Stomach (tissue), 19 donors: ENCODE measurements at regions of chr1 and their contacts with region 1.

Region 1: GRCh38 chr1:223683586-223684487 is 18.3 kb upstream of the CAPN8 start:
- DNase-seq: peak; percentile 69 to 92
- H3K4me3 ChIP-seq: no peak overlapping the region
- H3K27ac ChIP-seq: no peak overlapping the region
- H3K4me1 ChIP-seq: peaks cover 0 to 4% (median 2%) of the 10 kb centered on the region in 4 donors
- H3K27me3 ChIP-seq: no peaks in the 10 kb centered on the region
- CTCF ChIP-seq: peak in 5 of 7 experiments; percentile 34 to 78 (median 41)
- EP300 ChIP-seq: no peak
- POLR2A ChIP-seq: no peak

Region 2: DNA sequence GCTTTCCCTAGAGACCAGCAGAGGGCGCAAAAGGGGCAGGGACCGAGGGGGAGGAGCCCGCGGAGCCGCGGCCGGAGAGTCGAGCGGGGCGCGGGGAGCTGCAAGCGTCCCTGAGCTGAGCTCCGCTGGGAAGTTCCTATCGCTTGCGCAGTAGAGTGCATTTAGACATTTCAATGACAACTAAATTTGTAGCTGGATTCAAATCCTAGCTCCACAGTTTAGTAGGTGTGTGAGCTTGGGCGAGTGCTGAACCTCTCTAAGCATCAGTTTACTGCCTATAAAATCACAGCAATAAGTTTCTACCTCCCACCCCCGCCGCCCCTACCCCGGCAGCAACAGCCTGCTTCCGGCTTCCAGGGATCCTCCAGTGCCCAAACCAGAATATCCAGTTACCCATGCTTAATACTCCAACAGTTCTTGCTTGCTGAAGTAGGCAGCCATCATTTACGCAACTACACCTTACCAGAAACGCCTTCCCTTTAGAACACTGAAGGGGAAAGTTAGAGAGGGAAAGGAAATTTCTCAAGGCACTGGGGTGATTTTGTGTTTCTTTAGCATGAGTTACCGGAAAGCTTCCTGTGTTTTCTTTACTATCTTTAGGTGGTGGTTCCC is 549.9 kb before region 1 on chr1:
- intact Hi-C with region 1: loop called (anchors 10 kb)
- DNase-seq: peak; percentile 91 to 96
- H3K4me3 ChIP-seq: peak overlapping the region; percentile 32 to 44 (median 38)
- H3K27ac ChIP-seq: peak overlapping the region; percentile 70 to 85 (median 79)
- H3K4me1 ChIP-seq: peaks cover 7 to 63% (median 46%) of the 10 kb centered on the region in 4 donors
- H3K27me3 ChIP-seq: no peaks in the 10 kb centered on the region
- CTCF ChIP-seq: peak in 3 of 7 experiments; percentile 88 to 96 (median 95)
- EP300 ChIP-seq: no peak
- POLR2A ChIP-seq: no peak

Region 3: GRCh38 chr1:223556414-223557129 is 127.3 kb before region 1 on chr1:
- intact Hi-C with region 1: no loop called
- DNase-seq: peak; percentile 67 to 75
- H3K4me3 ChIP-seq: no peak overlapping the region
- H3K27ac ChIP-seq: no peak overlapping the region
- H3K4me1 ChIP-seq: no peaks in the 10 kb centered on the region
- H3K27me3 ChIP-seq: no peaks in the 10 kb centered on the region
- CTCF ChIP-seq: peak in 5 of 7 experiments; percentile 50 to 75 (median 59)
- EP300 ChIP-seq: no peak
- POLR2A ChIP-seq: no peak

Region 4: GRCh38 chr1:223788746-223789415 is 105.0 kb after region 1 on chr1:
- intact Hi-C with region 1: no loop called
- DNase-seq: peak in 1 of 2 donors; percentile 31
- H3K4me3 ChIP-seq: no peak overlapping the region
- H3K27ac ChIP-seq: no peak overlapping the region
- H3K4me1 ChIP-seq: peaks cover 0 to 29% (median 10%) of the 10 kb centered on the region in 4 donors
- H3K27me3 ChIP-seq: no peaks in the 10 kb centered on the region
- CTCF ChIP-seq: no peak
- EP300 ChIP-seq: no peak
- POLR2A ChIP-seq: no peak

Region 5: DNA sequence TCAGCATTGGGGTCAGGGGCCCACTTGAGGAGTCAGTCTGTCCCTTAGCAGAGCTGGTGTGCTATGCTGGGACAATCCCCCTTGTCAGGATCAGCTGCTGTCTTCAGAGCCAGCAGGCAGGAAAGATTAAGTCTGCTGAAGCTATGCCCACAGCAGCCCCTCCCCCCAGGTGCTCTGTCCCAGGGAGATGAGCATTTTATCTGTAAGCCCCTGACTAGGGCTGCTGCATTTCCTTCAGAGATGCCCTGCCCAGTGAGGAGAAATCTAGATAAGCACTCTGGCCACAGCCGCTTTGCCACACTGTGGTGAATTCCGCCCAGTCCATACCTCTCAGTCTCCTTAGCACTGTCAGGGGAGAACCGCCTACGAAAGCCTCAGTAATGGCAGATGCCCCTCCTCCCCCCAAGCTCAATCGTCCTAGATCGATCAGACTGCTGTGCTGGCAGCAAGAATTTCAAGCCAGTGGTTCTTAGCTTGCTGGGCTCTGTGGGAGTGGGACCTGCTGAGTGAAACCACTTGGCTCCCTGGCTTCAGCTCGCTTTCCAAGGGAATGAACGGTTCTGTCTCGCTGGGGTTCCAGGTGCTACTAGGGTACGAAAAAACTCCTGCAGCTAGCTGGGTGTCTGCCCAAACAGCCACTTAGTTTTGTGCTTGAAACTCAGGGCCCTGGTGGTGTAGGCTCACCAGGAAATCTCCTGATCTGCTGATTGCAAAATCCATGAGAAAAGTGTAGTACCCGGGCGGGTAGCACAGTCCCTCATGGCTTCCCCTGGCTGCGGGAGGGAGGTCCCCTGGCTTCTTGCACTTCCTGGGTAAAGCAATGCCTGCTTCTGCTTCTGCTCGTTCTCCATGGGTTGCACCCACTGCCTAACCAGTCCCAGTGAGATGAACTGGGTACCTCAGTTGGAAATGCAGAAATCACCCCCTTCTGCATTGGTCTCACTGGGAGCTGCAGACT is 187.1 kb after region 1 on chr1:
- intact Hi-C with region 1: no loop called
- DNase-seq: peak in 1 of 2 donors; percentile 12
- H3K4me3 ChIP-seq: no peak overlapping the region
- H3K27ac ChIP-seq: no peak overlapping the region
- H3K4me1 ChIP-seq: no peaks in the 10 kb centered on the region
- H3K27me3 ChIP-seq: peaks cover 0 to 12% (median 0%) of the 10 kb centered on the region in 3 donors
- CTCF ChIP-seq: no peak
- EP300 ChIP-seq: no peak
- POLR2A ChIP-seq: no peak